Activated CD4-positive, alpha-beta T cell treated with anti-CD3 and anti-CD28 coated beads for 36 hours (primary cell): ENCODE measurements at regions of chr7 and their contacts with region 1.

Region 1: DNA sequence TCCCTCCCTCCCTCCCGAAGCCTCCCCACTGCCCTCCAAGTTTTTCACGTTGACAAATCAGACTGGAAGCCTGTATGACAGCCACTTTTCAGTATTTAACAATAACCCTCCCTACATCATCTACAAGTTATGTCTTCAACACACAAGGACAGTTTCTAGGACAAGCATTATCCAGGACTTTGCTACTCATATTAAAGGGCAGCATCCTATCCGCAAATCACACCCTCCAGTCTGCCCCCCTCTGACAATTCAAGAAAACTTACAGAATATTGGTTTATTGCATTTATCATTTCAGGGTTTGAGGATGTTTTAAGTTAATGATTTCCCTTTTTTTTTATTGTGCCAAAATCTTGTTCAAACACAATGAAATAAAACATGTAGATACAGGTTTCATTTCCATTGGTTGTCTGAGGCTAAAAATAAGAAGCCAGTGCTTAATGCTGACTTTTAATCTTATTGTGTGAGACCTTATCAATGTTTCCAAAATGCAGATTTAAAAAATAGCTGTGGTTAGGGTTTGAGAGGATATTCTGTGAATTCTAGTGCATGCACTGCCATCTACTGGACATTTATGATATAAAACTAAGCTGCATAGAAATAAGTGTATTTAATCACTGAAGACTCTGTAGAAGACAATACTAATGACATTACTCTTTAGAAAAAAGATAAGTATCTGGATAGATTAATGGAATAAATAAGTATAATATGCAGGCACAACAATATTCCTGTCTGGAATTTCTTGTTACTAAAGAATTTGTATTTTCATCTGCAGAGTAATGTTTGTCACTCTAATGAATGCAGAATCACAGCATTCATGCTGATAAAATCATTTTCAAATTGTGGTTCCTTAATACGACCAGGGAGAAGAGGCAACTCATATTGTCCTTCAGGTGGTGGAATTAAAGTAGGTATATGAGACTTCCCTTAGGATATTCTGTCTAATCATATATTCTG is 64.1 kb downstream of the CAV1 start:
- DNase-seq: no peak
- ATAC-seq: peak; percentile 13
- H3K4me3 Mint-ChIP-seq: no peak overlapping the region
- H3K27ac Mint-ChIP-seq: peak overlapping the region; percentile 39
- H3K4me1 Mint-ChIP-seq: peaks cover 24% of the 10 kb centered on the region
- H3K27me3 Mint-ChIP-seq: peaks cover 18% of the 10 kb centered on the region

Region 2: GRCh38 chr7:116180302-116180701 is 408.6 kb before region 1 on chr7:
- CTCF ChIA-PET with region 1: interaction called, 13 read pairs
- POLR2A ChIA-PET with region 1: no interaction called
- intact Hi-C with region 1: loop called in 1 of 2 experiments (anchors 1 kb)
- DNase-seq: peak; percentile 21
- ATAC-seq: peak; percentile 74
- H3K4me3 Mint-ChIP-seq: no peak overlapping the region
- H3K27ac Mint-ChIP-seq: no peak overlapping the region
- H3K4me1 Mint-ChIP-seq: peaks cover 7% of the 10 kb centered on the region
- H3K27me3 Mint-ChIP-seq: no peaks in the 10 kb centered on the region

Region 3: DNA sequence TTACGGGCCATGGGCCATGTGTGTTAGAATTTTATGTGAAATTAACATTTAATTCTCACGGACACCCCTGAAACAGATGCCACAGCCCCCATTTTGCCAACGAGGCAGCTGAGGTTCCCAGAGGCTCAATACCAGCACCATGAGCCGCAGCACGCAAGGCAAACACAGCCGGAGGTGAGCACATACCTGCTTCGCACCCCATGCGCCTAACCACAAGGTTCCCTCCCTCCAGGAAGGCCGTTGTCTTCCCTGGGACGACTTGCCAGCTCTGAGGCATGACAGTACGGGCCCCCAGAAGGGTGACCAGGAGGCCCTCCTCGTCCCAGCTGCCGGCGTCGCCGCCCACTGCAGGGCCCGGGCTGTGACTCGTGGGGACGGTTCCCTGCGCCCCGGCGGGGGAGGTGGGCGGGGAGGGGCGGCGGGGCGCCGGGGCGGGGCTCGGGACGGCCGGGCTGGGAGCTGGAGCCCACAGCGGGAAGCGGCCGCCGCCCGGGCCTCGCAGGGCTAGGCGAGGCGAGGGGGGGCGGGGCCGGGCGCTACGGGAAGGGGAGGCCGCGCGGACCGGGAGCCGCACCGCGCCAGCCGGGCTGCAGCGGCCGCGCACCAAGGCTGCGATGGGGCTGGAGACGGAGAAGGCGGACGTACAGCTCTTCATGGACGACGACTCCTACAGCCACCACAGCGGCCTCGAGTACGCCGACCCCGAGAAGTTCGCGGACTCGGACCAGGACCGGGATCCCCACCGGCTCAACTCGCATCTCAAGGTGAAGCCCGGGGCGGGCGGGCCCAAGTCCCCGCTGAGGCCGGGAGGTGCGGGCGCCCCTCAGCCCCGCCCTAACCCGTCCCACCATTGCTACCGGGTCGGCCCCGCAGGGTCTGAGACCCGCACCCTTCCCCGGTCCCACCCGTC is 89.5 kb before region 1 on chr7 and contains the start of gene CAV2:
- CTCF ChIA-PET with region 1: interaction called, 4 read pairs
- POLR2A ChIA-PET with region 1: no interaction called
- intact Hi-C with region 1: loop called in 1 of 2 experiments (anchors 5 kb)
- DNase-seq: peak; percentile 31
- ATAC-seq: no peak
- H3K4me3 Mint-ChIP-seq: peak within 1 kb of the TSS; percentile 43
- H3K27ac Mint-ChIP-seq: no peak within 1 kb of the TSS
- H3K4me1 Mint-ChIP-seq: peaks cover 10% of the 10 kb centered on the region
- H3K27me3 Mint-ChIP-seq: peaks cover 47% of the 10 kb centered on the region
- total RNA-seq, gene CAV2: not detected

Region 4: GRCh38 chr7:116601426-116601825 is 12.5 kb after region 1 on chr7:
- CTCF ChIA-PET with region 1: interaction called, 28 read pairs
- POLR2A ChIA-PET with region 1: no interaction called
- intact Hi-C with region 1: no loop called
- DNase-seq: peak; percentile 64
- ATAC-seq: peak; percentile 92
- H3K4me3 Mint-ChIP-seq: no peak overlapping the region
- H3K27ac Mint-ChIP-seq: no peak overlapping the region
- H3K4me1 Mint-ChIP-seq: peaks cover 14% of the 10 kb centered on the region
- H3K27me3 Mint-ChIP-seq: peaks cover 14% of the 10 kb centered on the region

Region 5: GRCh38 chr7:116786791-116787443 is 198.0 kb after region 1 on chr7:
- CTCF ChIA-PET with region 1: interaction called, 5 read pairs
- POLR2A ChIA-PET with region 1: no interaction called
- intact Hi-C with region 1: loop called (anchors 1 to 5 kb)
- DNase-seq: peak; percentile 48
- ATAC-seq: peak; percentile 97
- H3K4me3 Mint-ChIP-seq: no peak overlapping the region
- H3K27ac Mint-ChIP-seq: no peak overlapping the region
- H3K4me1 Mint-ChIP-seq: no peaks in the 10 kb centered on the region
- H3K27me3 Mint-ChIP-seq: no peaks in the 10 kb centered on the region

Region 6: GRCh38 chr7:117283371-117283770 is 694.5 kb after region 1 on chr7:
- CTCF ChIA-PET with region 1: no interaction called
- POLR2A ChIA-PET with region 1: no interaction called
- intact Hi-C with region 1: no loop called
- DNase-seq: no peak
- ATAC-seq: no peak
- H3K4me3 Mint-ChIP-seq: no peak overlapping the region
- H3K27ac Mint-ChIP-seq: no peak overlapping the region
- H3K4me1 Mint-ChIP-seq: no peaks in the 10 kb centered on the region
- H3K27me3 Mint-ChIP-seq: peaks cover 5% of the 10 kb centered on the region